IMR-90 (cell line): ENCODE measurements at regions of chrX and their contacts with region 1.

Region 1: GRCh38 chrX:103918581-103919269 is 43.7 kb upstream of the TMSB15B start:
- DNase-seq: peak; percentile 59
- ATAC-seq: peak; percentile 88
- H3K4me3 ChIP-seq: peak overlapping the region; percentile 63
- H3K27ac ChIP-seq: peak overlapping the region; percentile 50; the same call in 1 of the 2 replicates
- H3K4me1 ChIP-seq: no peaks in the 10 kb centered on the region
- H3K27me3 ChIP-seq: peaks cover 2% of the 10 kb centered on the region; the same call in 1 of the 2 replicates
- CTCF ChIP-seq: no peak; the same call in 1 of the 2 replicates
- POLR2A ChIP-seq: no peak
- RAD21 ChIP-seq: no peak

Region 2: DNA sequence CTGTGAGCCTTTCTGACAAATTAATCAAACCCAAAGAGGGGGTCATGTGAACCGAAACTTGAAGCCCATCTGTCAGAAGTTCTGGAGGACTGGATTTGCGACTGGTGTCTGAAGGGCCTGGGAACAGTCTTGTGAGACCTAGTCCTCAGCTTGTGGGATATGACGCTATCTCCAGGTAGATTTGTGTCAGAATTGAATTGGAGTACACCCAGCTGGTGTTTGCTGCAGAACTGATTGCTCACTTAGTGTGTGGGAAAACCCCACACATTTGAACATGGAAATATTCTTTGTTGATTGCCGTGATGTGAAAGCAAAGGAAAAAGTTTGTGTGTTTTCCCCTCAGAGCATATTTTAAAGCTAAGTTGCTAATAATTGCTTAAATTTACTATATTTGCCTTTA is 13.4 kb after region 1 on chrX:
- CTCF ChIA-PET with region 1: interaction called, 11 read pairs
- POLR2A ChIA-PET with region 1: no interaction called
- dilution Hi-C with region 1: no loop called
- in situ Hi-C with region 1: no loop called
- intact Hi-C with region 1: no loop called
- DNase-seq: no peak
- ATAC-seq: no peak
- H3K4me3 ChIP-seq: no peak overlapping the region
- H3K27ac ChIP-seq: no peak overlapping the region
- H3K4me1 ChIP-seq: no peaks in the 10 kb centered on the region
- H3K27me3 ChIP-seq: no peaks in the 10 kb centered on the region
- CTCF ChIP-seq: no peak
- POLR2A ChIP-seq: no peak
- RAD21 ChIP-seq: no peak